CD8-positive, alpha-beta T cell (primary cell): ENCODE measurements at regions of chr10 and their contacts with region 1.

Region 1: DNA sequence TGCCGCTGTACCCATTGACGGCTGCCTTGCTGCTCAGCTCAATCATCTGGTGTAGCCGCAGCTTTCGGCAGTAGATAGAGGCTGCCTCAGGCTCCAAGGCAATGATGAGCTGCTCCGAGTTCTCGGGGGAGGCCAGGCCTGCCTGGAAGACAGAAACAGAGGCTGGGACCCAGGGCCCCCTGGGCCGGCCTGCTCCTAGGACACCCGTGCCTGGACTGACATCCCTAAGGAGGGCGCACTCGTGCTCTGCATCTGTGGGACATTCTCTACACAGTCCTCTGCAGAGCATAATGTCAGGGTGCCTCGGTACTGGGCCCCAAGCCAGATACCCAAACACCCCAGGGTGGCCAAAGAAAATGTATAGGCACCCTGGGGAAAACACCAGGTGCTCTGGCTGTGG is 58.5 kb downstream of the HSPA12A start:
- DNase-seq: no peak
- ATAC-seq: no peak
- H3K4me3 ChIP-seq: no peak overlapping the region
- H3K4me3 Mint-ChIP-seq: no peak overlapping the region
- H3K27ac ChIP-seq: no peak overlapping the region
- H3K27ac Mint-ChIP-seq: no peak overlapping the region
- H3K4me1 ChIP-seq: no peaks in the 10 kb centered on the region
- H3K4me1 Mint-ChIP-seq: no peaks in the 10 kb centered on the region
- H3K27me3 ChIP-seq: no peaks in the 10 kb centered on the region
- H3K27me3 Mint-ChIP-seq: peaks cover 28% of the 10 kb centered on the region
- CTCF ChIP-seq: no peak

Region 2: GRCh38 chr10:116765547-116766162 is 81.8 kb after region 1 on chr10:
- CTCF ChIA-PET with region 1: interaction called, 6 read pairs
- POLR2A ChIA-PET with region 1: no interaction called
- intact Hi-C with region 1: loop called (anchors 1 to 5 kb)
- DNase-seq: peak in 4 of 9 experiments; percentile 31 to 53 (median 40)
- ATAC-seq: no peak
- H3K4me3 ChIP-seq: no peak overlapping the region
- H3K4me3 Mint-ChIP-seq: no peak overlapping the region
- H3K27ac ChIP-seq: no peak overlapping the region
- H3K27ac Mint-ChIP-seq: no peak overlapping the region
- H3K4me1 ChIP-seq: no peaks in the 10 kb centered on the region
- H3K4me1 Mint-ChIP-seq: no peaks in the 10 kb centered on the region
- H3K27me3 ChIP-seq: peaks cover 7% of the 10 kb centered on the region in 2 experiments
- H3K27me3 Mint-ChIP-seq: peaks cover 56% of the 10 kb centered on the region
- CTCF ChIP-seq: no peak

Region 3: GRCh38 chr10:116850058-116850611 is 166.3 kb after region 1 on chr10:
- CTCF ChIA-PET with region 1: no interaction called
- POLR2A ChIA-PET with region 1: no interaction called
- intact Hi-C with region 1: no loop called
- DNase-seq: no peak
- ATAC-seq: no peak
- H3K4me3 ChIP-seq: no peak overlapping the region
- H3K4me3 Mint-ChIP-seq: no peak overlapping the region
- H3K27ac ChIP-seq: no peak overlapping the region
- H3K27ac Mint-ChIP-seq: no peak overlapping the region
- H3K4me1 ChIP-seq: no peaks in the 10 kb centered on the region
- H3K4me1 Mint-ChIP-seq: peaks cover 8% of the 10 kb centered on the region
- H3K27me3 ChIP-seq: peaks cover 8 to 19% of the 10 kb centered on the region in 2 experiments
- H3K27me3 Mint-ChIP-seq: peaks cover 57% of the 10 kb centered on the region
- CTCF ChIP-seq: no peak